ENCODE measurements at regions of chr13 and their contacts with region 1.

Region 1: DNA sequence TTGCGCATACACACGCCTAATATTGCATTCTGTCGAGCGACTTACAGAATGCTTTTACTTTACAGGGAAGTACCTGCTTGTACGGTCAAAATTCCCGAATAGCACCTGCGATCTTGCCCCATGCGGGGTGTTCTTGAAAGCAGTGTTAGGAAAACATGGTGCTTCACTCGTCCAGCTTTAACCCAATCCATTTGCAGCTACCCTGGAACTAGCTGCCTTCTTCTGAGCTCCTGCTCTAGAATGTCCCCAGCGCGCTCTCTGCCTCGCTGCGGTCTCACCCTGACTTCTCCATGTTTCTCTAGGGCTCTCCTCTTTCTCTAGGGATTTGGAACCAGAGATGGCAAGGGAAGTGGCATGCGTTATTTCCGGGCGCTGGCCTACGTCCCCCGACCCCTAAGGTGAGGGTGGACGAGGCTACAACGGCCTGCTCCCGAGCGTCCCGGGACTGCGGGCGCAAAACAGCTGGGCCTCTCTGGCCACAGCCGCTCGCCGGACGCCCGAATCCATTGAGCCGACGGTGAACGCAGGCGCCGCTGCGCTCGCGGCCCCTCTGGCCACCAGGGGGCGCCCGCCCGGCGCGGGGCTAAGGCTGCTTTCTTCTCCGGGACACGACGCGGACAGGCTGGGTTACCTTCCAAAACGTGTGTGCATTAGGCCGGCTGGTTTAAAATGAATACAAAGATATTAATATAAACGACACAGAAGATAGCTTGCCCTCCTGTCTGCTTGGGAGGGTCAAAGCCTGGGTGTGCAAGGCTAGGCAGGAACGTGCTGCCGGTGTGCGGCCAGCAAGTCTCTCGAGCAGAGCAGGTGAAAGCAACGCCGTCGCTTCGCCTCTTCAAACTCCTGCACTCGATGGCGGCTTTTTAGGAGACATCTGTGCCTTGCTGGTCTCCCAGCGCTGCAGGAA is 1.8 kb upstream of the SPRY2 start:
- DNase-seq: peak in 1 of 2 donors; percentile 92
- H3K4me3 ChIP-seq: peak overlapping the region; percentile 89 to 91
- H3K27ac ChIP-seq: peak overlapping the region; percentile 96 to 97
- H3K4me1 ChIP-seq: peaks cover 0 to 7% of the 10 kb centered on the region in 2 donors
- H3K27me3 ChIP-seq: no peaks in the 10 kb centered on the region
- CTCF ChIP-seq: peak; percentile 83 to 99 (median 98)

Region 2: DNA sequence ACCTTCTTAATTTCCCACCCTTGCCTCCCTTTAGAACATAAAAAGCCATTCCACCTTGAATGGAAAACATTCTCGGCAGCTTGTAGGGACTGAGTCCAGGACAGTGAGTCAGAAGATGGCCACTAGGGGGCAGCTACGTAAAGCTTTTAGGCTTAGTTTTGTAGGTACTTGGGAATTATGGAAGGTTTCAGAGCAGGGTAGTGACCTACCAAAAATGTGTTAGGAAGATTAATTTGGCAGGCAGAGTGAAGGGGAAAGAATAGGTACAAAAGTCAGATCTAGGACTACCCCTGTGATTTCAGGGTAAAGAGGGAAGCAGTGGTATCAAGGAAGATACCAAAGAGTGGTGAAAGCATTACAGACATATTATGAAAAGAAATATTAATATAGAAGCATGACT is 663.4 kb before region 1 on chr13:
- intact Hi-C with region 1: loop called (anchors 10 kb)
- DNase-seq: peak in 1 of 2 donors; percentile 79
- H3K4me3 ChIP-seq: no peak overlapping the region
- H3K27ac ChIP-seq: no peak overlapping the region
- H3K4me1 ChIP-seq: no peaks in the 10 kb centered on the region
- H3K27me3 ChIP-seq: no peaks in the 10 kb centered on the region
- CTCF ChIP-seq: peak; percentile 65 to 74 (median 67)

Region 3: GRCh38 chr13:79936368-79937136 is 406.2 kb before region 1 on chr13:
- intact Hi-C with region 1: loop called (anchors 2 kb)
- DNase-seq: peak; percentile 16 to 91
- H3K4me3 ChIP-seq: no peak overlapping the region
- H3K27ac ChIP-seq: peak overlapping the region; percentile 87 to 97
- H3K4me1 ChIP-seq: peaks cover 0 to 16% of the 10 kb centered on the region in 2 donors
- H3K27me3 ChIP-seq: no peaks in the 10 kb centered on the region
- CTCF ChIP-seq: no peak

Region 4: GRCh38 chr13:80132741-80133601 is 209.8 kb before region 1 on chr13:
- intact Hi-C with region 1: loop called (anchors 2 kb)
- DNase-seq: peak in 1 of 2 donors; percentile 86
- H3K4me3 ChIP-seq: peak overlapping the region; percentile 29 to 57
- H3K27ac ChIP-seq: peak overlapping the region; percentile 81 to 88
- H3K4me1 ChIP-seq: peaks cover 12 to 26% of the 10 kb centered on the region in 2 donors
- H3K27me3 ChIP-seq: no peaks in the 10 kb centered on the region
- CTCF ChIP-seq: no peak

Region 5: GRCh38 chr13:80469853-80470381 is 127.2 kb after region 1 on chr13:
- intact Hi-C with region 1: loop called (anchors 2 kb)
- DNase-seq: peak; percentile 62 to 93
- H3K4me3 ChIP-seq: peak overlapping the region in 1 of 2 donors; percentile 14
- H3K27ac ChIP-seq: peak overlapping the region; percentile 85 to 91
- H3K4me1 ChIP-seq: peaks cover 11 to 24% of the 10 kb centered on the region in 2 donors
- H3K27me3 ChIP-seq: no peaks in the 10 kb centered on the region
- CTCF ChIP-seq: no peak

Region 6: DNA sequence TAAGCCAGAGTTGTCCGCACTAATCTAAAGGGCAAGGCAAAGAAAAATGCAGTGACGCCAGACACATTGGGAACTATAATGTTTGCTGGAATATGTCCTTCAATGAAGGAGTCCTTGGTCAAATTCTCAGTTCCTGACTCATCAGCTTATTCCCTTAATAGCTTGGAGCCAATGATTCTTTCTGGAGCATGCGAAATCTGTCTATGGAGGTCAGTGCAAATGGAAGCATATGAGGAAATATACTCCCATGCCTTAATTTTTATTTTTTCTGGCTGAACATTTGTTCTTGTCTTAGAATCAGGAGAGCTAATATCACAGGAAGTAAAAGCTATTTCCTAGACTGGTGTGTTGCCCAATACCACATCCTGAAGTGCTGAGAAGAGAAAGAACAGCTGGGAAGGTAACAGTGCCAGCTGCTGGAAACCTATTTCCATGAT is 288.0 kb after region 1 on chr13:
- intact Hi-C with region 1: loop called (anchors 5 kb)
- DNase-seq: no peak
- H3K4me3 ChIP-seq: no peak overlapping the region
- H3K27ac ChIP-seq: no peak overlapping the region
- H3K4me1 ChIP-seq: no peaks in the 10 kb centered on the region
- H3K27me3 ChIP-seq: no peaks in the 10 kb centered on the region
- CTCF ChIP-seq: no peak

Measured in ascending aorta (tissue), 2 donors.